HEK293 (cell line): ENCODE measurements at regions of chr15 and their contacts with region 1.

Region 1: DNA sequence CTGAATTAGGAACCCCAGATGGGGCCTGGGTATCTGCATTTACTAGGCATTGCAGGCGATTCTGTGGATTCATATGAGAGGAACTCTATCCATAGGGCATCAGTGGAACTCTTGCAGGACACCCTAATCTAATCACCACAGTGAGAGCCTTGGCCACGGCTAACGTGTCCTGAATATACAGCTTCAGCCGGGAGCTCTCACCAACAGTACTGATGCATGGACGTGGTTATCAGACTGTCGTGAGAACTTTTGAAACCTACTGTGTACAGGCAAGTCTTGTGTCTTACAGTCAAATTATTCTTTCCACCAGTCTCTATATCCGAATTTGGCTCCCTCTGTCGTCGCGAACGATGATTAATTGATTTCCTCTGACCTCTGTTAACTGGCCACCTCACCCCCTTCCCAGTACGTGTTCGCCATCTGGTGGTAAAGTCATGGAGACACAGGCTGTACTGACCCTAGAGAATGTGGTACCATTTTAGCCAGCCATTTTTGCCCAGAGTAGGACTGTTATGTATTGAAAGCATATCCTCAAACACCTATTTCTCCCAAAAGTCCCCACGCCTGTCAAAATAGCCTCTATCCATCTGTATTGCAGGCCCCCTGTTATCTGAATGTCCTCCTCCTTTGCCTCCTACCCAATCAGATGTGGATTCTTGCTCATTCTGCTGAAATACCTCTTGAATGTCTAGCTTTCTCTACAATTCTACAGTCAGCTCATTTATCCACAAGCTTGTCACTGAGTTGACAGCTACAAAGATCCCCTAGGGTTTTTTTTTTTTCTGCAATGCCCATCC is 39.7 kb downstream of the GLDN start:
- H3K4me3 ChIP-seq: no peak overlapping the region
- H3K27ac ChIP-seq: no peak overlapping the region
- H3K4me1 ChIP-seq: no peaks in the 10 kb centered on the region
- CTCF ChIP-seq: peak; percentile 92

Region 2: DNA sequence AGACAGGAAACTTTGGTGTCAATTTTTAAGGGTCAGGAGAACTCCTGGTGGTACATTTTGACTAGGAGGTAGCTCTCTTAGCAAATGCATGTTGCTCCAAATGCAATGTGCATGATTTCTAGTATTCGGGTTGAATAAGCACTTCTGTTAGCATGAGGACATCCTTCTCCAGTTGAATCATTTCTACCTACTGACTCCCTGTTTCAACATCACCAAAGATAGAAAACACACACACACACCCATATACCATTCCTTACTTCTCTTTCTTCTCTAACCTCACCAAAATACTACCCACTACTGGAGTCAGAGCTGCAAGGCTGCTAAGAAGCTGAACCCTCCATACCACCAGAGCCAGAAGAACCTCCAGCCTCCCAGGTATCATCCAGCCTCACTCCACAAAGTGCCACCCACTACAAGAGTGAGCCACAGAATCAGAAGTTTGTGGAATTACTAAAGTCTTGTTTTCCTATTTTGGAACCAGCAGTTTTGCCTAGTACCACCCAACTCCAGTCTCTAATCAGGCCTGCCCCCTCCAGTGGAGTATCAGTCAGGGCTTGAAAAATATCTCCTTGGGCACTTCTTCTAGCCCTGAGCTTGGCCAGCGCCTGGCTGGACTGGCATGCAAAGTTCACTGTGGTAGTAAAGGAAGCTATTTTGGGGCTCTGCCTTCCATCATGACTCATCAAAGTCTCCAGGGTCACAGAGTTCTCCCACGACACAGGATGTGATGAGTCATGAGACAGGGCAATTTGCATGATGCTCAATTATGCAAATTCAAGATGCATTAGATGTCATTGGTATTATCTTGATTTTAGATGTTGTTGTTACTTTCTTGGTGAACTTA is 153.0 kb before region 1 on chr15:
- CTCF ChIA-PET with region 1: interaction called, 26 read pairs
- POLR2A ChIA-PET with region 1: no interaction called
- H3K4me3 ChIP-seq: no peak overlapping the region
- H3K27ac ChIP-seq: no peak overlapping the region
- H3K4me1 ChIP-seq: no peaks in the 10 kb centered on the region
- CTCF ChIP-seq: no peak

Region 3: GRCh38 chr15:51270706-51271105 is 110.5 kb before region 1 on chr15:
- CTCF ChIA-PET with region 1: interaction called, 10 read pairs
- POLR2A ChIA-PET with region 1: no interaction called
- H3K4me3 ChIP-seq: no peak overlapping the region
- H3K27ac ChIP-seq: no peak overlapping the region
- H3K4me1 ChIP-seq: peaks cover 8% of the 10 kb centered on the region
- CTCF ChIP-seq: no peak

Region 4: DNA sequence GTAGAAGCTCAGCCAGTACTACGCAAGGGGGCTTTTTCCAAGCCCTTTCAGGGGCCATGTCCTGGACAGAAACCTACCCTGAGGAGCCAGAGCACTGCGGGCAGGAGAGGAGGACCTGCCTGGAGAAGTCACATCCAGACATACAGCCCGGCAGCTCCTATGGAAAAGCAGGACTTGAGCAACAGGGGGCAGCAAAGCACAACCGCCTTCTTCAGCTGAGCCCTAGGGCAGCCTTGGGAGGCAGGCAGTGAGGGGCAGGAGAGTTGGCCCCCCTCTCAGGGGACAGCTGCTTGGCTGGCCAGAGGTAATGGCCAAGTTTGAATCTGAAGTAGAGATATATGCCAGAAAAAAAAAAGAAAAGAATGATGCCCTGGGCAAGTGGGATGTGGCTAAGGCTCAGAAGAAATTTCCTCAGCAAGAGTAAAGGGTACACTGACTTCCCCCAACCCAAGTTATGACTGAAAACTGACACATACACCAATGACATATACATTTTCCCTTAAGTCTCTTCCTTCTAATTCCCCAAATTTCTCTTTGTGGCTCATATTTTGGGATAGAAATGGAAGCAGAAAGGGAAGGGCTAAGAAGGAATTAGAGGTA is 99.7 kb before region 1 on chr15:
- CTCF ChIA-PET with region 1: interaction called, 72 read pairs
- POLR2A ChIA-PET with region 1: no interaction called
- H3K4me3 ChIP-seq: no peak overlapping the region
- H3K27ac ChIP-seq: no peak overlapping the region
- H3K4me1 ChIP-seq: no peaks in the 10 kb centered on the region
- CTCF ChIP-seq: peak; percentile 51

Region 5: DNA sequence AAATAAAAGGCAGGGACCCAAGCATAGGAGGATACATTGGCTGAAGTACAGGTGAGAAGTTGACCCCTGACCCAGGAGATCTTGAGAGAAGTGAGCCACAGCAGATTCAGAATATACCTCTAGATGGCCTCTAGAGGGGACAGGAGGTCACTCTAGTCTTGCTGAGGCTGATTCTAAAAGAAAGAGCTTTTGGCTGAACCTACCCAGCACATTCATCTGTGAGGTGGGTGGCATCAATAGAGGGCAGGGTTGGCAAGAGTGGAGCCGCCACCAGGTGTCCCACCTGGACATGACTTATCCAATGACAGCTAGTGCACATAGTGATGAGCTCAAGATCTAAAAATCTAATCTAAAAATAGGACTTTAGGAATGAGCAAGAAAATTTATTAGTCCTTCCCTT is 94.4 kb before region 1 on chr15:
- CTCF ChIA-PET with region 1: interaction called, 72 read pairs
- POLR2A ChIA-PET with region 1: no interaction called
- H3K4me3 ChIP-seq: no peak overlapping the region
- H3K27ac ChIP-seq: no peak overlapping the region
- H3K4me1 ChIP-seq: no peaks in the 10 kb centered on the region
- CTCF ChIP-seq: no peak

Region 6: GRCh38 chr15:51401872-51402517 is 20.8 kb after region 1 on chr15:
- CTCF ChIA-PET with region 1: interaction called, 14 read pairs
- POLR2A ChIA-PET with region 1: no interaction called
- H3K4me3 ChIP-seq: no peak overlapping the region
- H3K27ac ChIP-seq: no peak overlapping the region
- H3K4me1 ChIP-seq: no peaks in the 10 kb centered on the region
- CTCF ChIP-seq: no peak